Activated CD4-positive, alpha-beta T cell treated with anti-CD3 and anti-CD28 coated beads for 36 hours (primary cell): ENCODE measurements at regions of chr14 and their contacts with region 1.

Region 1: GRCh38 chr14:106372870-106373652 is 846.7 kb downstream of the TMEM121 start:
- DNase-seq: peak; percentile 93
- ATAC-seq: peak; percentile 90
- H3K4me3 Mint-ChIP-seq: peak overlapping the region; percentile 47
- H3K27ac Mint-ChIP-seq: peak overlapping the region; percentile 27
- H3K4me1 Mint-ChIP-seq: peaks cover 21% of the 10 kb centered on the region
- H3K27me3 Mint-ChIP-seq: peaks cover 11% of the 10 kb centered on the region

Region 2: DNA sequence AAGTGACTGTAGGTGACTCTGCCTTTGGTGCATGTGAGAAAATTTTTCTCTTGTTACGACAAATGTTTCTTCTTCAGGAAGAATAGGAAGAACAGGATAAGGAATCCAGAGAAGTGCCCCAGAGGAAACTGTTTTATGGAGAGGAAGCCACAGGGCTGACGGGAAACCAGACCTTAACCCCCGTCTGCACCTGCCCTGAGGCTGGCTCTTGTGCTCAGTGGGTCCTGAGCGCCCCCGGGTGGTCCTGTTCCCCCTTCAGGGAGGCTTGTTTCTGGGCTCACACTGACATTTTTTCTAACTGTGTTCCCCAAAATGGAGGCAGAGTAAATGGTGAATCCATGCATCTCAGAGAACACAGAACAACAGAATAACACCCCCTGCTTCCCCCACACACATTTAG is 154.9 kb before region 1 on chr14:
- CTCF ChIA-PET with region 1: no interaction called
- POLR2A ChIA-PET with region 1: no interaction called
- intact Hi-C with region 1: no loop called
- DNase-seq: no peak
- ATAC-seq: no peak
- H3K4me3 Mint-ChIP-seq: no peak overlapping the region
- H3K27ac Mint-ChIP-seq: no peak overlapping the region
- H3K4me1 Mint-ChIP-seq: peaks cover 26% of the 10 kb centered on the region
- H3K27me3 Mint-ChIP-seq: peaks cover 2% of the 10 kb centered on the region

Region 3: DNA sequence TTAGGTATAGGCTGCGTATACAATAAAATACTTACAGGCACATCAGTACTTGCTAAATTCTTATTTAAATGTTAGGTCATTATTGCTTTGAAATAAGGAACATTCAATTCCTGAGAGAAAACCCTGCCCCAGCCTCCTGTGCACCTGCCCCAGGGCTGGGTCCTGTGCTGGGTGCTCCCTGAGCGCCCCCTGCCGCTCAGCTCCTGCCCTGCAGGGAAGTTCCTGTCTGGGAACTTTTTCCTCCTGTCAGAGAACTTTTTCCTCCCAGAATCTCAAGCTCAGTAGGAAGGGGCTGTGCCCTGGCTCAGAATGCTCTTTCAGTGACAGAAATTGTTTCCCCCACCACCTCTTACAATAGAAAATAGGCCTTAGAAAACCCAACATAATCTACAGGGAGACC is 95.6 kb before region 1 on chr14:
- CTCF ChIA-PET with region 1: interaction called, 19 read pairs
- POLR2A ChIA-PET with region 1: no interaction called
- intact Hi-C with region 1: no loop called
- DNase-seq: peak; percentile 66
- ATAC-seq: peak; percentile 51
- H3K4me3 Mint-ChIP-seq: peak overlapping the region; percentile 56
- H3K27ac Mint-ChIP-seq: no peak overlapping the region
- H3K4me1 Mint-ChIP-seq: peaks cover 34% of the 10 kb centered on the region
- H3K27me3 Mint-ChIP-seq: peaks cover 2% of the 10 kb centered on the region

Region 4: GRCh38 chr14:106318700-106319099 is 54.4 kb before region 1 on chr14:
- CTCF ChIA-PET with region 1: interaction called, 19 read pairs
- POLR2A ChIA-PET with region 1: no interaction called
- intact Hi-C with region 1: loop called in 1 of 2 experiments (anchors 10 kb)
- DNase-seq: peak; percentile 83
- ATAC-seq: peak; percentile 80
- H3K4me3 Mint-ChIP-seq: no peak overlapping the region
- H3K27ac Mint-ChIP-seq: no peak overlapping the region
- H3K4me1 Mint-ChIP-seq: no peaks in the 10 kb centered on the region
- H3K27me3 Mint-ChIP-seq: no peaks in the 10 kb centered on the region

Region 5: GRCh38 chr14:106327234-106327633 is 45.8 kb before region 1 on chr14:
- CTCF ChIA-PET with region 1: interaction called, 19 read pairs
- POLR2A ChIA-PET with region 1: no interaction called
- intact Hi-C with region 1: loop called in 1 of 2 experiments (anchors 10 kb)
- DNase-seq: no peak
- ATAC-seq: no peak
- H3K4me3 Mint-ChIP-seq: no peak overlapping the region
- H3K27ac Mint-ChIP-seq: no peak overlapping the region
- H3K4me1 Mint-ChIP-seq: no peaks in the 10 kb centered on the region
- H3K27me3 Mint-ChIP-seq: no peaks in the 10 kb centered on the region

Region 6: GRCh38 chr14:106518054-106518943 is 145.2 kb after region 1 on chr14:
- CTCF ChIA-PET with region 1: no interaction called
- POLR2A ChIA-PET with region 1: no interaction called
- intact Hi-C with region 1: no loop called
- DNase-seq: peak; percentile 92
- ATAC-seq: peak; percentile 84
- H3K4me3 Mint-ChIP-seq: no peak overlapping the region
- H3K27ac Mint-ChIP-seq: no peak overlapping the region
- H3K4me1 Mint-ChIP-seq: peaks cover 13% of the 10 kb centered on the region
- H3K27me3 Mint-ChIP-seq: no peaks in the 10 kb centered on the region

Region 7: GRCh38 chr14:106681568-106681967 is 308.5 kb after region 1 on chr14:
- CTCF ChIA-PET with region 1: no interaction called
- POLR2A ChIA-PET with region 1: no interaction called
- intact Hi-C with region 1: no loop called
- DNase-seq: no peak
- ATAC-seq: peak; percentile 68
- H3K4me3 Mint-ChIP-seq: no peak overlapping the region
- H3K27ac Mint-ChIP-seq: no peak overlapping the region
- H3K4me1 Mint-ChIP-seq: no peaks in the 10 kb centered on the region
- H3K27me3 Mint-ChIP-seq: peaks cover 4% of the 10 kb centered on the region